Left cardiac atrium (tissue), 4 donors: ENCODE measurements at regions of chr7 and their contacts with region 1.

Region 1: DNA sequence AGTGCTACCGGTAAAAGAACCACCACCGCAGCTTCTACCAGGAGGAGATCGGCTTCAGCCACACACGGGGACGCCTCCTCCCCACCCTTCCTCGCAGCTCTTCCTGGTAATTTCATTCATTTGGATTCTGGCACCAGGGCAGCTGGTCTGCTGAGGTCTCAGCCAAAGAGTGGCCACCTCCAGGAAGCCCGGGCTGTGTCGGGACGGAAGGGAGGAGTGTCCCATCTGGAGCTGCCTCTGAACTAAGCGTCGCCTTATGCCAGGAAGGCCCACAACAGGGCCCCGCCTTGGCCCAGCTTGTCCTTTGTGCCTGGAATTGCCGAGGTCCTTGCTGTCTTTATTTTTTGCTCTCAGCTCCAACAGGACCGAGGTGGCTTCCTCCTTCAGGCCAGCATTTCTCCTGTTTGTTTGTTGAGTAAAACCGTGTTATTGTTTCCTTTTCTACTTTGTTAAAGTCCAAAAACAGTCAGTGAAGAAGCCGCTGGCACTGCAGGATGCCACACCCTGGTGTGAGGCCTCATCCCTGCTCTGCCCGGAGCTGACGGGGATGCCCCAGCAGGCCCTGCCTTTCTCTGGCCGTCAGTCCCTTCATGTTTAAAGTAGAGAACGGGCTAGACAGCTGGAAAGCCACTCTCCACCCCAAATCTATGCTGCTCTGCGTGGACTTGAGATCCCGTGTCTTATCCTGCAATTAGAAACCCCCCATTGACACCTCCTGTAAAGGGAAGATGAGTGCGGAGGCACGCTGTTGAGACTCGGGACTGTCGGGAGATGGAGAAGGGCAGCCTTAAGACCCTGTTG is 24.5 kb upstream of the TTYH3 start:
- DNase-seq: peak; percentile 90
- ATAC-seq: peak; percentile 70 to 82

Region 2: GRCh38 chr7:2567679-2568278 is 39.5 kb before region 1 on chr7:
- intact Hi-C with region 1: loop called in 1 of 2 experiments (anchors 5 kb)
- DNase-seq: peak; percentile 41
- ATAC-seq: peak; percentile 82 to 83

Region 3: DNA sequence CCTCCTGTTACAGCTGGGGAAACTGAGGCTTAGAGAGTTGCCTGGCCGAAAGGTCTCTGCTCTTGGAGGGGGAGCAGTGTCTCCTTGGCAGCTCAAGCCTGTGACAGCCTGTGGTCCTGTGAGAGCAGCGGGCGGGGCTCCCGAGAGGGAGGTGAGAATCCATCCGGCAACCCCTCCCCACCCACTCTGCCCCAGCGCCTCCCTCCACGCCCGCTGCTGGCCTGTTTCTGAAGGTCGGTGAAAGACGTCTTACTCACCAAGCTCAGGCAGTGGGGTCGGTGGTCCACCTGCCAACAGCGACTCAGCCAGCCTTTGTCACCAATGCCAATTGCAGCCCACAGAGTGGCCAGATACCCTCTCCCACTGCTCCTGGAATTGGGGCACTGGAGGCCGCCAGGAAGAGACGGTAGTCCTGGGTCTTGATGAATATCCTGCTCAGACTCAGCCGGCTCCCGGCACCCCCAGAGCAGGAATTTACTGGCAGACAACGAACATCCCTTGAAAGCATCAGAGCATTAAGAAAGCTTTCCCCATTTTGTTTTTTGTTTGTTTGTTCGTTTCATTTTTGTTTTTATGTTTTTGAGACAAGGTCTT is 17.1 kb after region 1 on chr7:
- intact Hi-C with region 1: loop called in 1 of 2 experiments (anchors 2 kb)
- DNase-seq: no peak
- ATAC-seq: no peak